Psoas muscle (tissue), 8 donors: ENCODE measurements at regions of chr11 and their contacts with region 1.

Region 1: DNA sequence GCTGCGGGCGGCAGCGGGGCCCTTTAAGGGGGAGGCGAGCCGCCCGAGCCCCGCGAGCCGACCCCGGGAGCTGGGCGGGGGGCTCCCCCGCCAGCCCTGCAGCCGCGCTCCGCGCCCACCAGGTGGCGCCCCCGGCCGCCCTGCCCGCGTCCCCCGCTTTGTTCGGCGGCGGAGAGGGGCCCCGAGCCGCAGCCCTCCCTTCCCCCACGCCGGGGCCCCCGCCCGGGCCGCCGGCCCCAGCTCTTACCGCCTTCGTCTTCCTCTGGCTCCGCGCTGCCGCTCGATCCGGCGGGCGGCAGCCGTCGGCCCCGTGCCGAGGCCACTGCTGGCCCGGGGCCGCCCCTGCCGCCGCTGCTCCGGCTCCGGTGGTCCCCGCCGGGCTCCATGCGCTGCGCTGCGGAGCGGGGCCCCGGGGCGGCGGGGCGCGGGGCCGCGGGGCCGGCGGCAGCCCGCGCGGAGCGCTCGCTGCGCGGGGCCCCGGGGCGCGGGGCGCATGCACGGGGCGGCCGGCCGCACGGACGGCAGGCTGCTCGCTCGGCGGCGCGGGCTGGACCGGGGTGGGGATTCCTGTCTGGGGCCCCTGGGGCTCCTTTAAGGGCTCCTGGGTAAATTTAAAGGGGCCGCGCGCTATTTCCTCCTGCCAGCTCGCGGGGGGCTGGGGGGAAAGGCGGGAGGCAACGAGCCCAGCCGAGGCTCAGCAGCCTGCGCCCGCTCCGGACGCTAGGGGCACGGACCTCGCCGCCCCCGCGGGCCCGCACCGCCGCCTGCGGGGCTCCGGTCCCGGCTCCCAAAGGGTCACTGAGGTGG is at the start of gene ZFTA:
- DNase-seq: peak; percentile 64 to 80
- ATAC-seq: peak; percentile 42 to 69 (median 66)
- H3K4me3 ChIP-seq: peak within 1 kb of the TSS; percentile 87
- H3K27ac ChIP-seq: peak within 1 kb of the TSS; percentile 77
- H3K4me1 ChIP-seq: peaks cover 5% of the 10 kb centered on the region
- H3K27me3 ChIP-seq: no peaks in the 10 kb centered on the region
- CTCF ChIP-seq: peak; percentile 87
- total RNA-seq, gene ZFTA: 4.4 to 10.9 (median 7.8) TPM

Region 2: GRCh38 chr11:63813035-63813562 is 44.7 kb after region 1 on chr11 and contains the start of gene SPINDOC:
- intact Hi-C with region 1: loop called in 1 of 2 experiments (anchors 2 kb)
- DNase-seq: peak; percentile 83 to 89
- ATAC-seq: peak; percentile 91 to 96 (median 94)
- H3K4me3 ChIP-seq: peak within 1 kb of the TSS; percentile 82
- H3K27ac ChIP-seq: peak within 1 kb of the TSS; percentile 52
- H3K4me1 ChIP-seq: peaks cover 11% of the 10 kb centered on the region
- H3K27me3 ChIP-seq: no peaks in the 10 kb centered on the region
- CTCF ChIP-seq: no peak
- total RNA-seq, gene SPINDOC: 3.8 to 8.8 (median 6.9) TPM

Region 3: DNA sequence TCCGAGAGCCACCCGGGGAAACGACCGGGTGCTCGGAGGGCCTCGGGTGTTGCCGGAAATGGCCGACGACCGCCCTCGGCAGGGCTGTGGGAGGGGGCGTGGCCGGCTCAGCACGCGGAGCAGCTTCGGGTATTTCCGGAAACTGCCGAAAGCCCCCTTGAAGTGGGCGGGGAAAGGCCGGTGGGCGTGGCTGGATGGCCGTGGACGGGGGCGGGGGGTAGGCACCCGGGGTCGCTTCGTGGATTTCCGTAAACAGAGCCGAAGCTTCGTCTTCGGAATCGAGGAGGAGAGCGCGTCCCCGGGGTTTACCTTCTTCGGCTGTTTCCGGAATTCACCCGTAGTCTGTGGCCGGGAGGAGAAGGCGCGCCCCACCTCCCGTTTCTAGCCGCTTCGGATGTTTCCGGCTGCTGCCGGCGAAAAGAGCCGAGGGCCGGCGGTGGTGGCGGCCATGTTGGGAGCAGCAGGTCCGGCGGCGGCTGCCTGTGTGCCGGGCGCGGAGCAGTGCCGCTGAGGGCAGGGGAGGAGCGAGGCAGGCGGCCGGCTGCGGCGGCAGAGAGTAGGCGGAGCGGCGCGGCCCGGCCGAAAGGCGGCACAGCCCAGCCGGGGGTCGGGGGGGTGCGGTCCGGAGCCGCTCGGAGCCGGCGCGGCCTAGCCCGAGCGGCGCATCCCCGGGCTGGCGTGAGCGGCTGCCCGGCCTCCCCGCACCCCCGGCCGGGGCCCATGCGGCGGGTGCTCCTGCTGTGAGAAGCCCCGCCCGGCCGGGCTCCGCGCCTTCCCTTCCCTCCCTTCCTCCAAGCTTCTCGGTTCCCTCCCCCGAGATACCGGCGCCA is 70.5 kb after region 1 on chr11 and contains the start of gene MARK2:
- intact Hi-C with region 1: loop called in 1 of 2 experiments (anchors 5 kb)
- DNase-seq: peak; percentile 98 to 99
- ATAC-seq: peak; percentile 91 to 94 (median 93)
- H3K4me3 ChIP-seq: peak within 1 kb of the TSS; percentile 89
- H3K27ac ChIP-seq: peak within 1 kb of the TSS; percentile 92
- H3K4me1 ChIP-seq: peaks cover 45% of the 10 kb centered on the region
- H3K27me3 ChIP-seq: no peaks in the 10 kb centered on the region
- CTCF ChIP-seq: no peak
- total RNA-seq, gene MARK2: 21.7 to 24.9 (median 22.9) TPM

Region 4: DNA sequence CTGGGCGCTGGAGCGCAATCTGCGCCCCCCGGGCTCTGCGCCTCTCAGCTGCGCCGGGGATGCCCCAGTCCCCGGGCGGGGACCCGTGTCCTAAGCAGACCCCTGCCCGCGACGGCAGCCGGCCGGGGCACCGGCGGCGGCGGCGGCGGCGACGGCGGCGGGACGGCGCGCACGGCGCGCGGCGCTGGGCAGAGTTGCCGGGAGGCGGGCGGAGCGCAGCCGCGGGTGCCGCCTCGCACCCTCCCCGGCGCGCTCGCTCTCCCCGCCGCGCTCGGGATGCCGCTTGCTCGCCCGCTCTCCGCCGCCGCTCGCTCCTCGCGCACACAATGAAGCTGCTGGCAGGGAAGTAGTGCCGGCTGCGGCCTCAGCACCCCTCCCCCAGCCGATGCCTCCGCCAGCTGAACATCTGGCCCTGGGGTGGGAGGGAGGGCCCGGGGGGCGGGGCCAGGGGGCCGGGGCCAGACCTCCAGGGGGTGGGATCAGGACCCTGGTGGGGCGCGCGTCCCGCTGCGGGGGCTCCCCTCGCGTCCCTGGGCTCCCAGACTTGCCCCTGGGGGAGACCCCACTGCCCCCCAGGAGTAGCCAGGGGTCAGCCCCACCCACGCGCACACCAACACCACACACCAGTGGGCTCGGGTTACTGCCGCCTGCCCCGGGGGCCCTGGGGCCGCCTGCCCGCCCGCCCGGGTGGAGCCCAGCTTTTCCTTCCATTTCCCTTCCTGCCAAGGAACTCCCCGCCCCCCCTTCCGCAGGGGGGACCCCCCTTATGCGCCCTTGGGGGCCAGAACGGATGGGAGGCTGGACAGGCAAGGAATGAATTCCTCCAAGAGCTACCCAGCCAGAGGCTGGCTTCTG is 148.6 kb after region 1 on chr11 and contains the start of gene RCOR2:
- intact Hi-C with region 1: no loop called
- DNase-seq: peak; percentile 80 to 88
- ATAC-seq: peak; percentile 48 to 71 (median 68)
- H3K4me3 ChIP-seq: peak within 1 kb of the TSS; percentile 73
- H3K27ac ChIP-seq: peak within 1 kb of the TSS; percentile 85
- H3K4me1 ChIP-seq: peaks cover 33% of the 10 kb centered on the region
- H3K27me3 ChIP-seq: no peaks in the 10 kb centered on the region
- CTCF ChIP-seq: no peak
- total RNA-seq, gene RCOR2: 0.25 to 2.1 (median 0.47) TPM

Region 5: GRCh38 chr11:63945477-63946163 is 177.2 kb after region 1 on chr11:
- intact Hi-C with region 1: loop called (anchors 2 to 5 kb)
- DNase-seq: peak; percentile 71 to 84
- ATAC-seq: peak; percentile 84 to 92 (median 88)
- H3K4me3 ChIP-seq: peak overlapping the region; percentile 37
- H3K27ac ChIP-seq: peak overlapping the region; percentile 85
- H3K4me1 ChIP-seq: peaks cover 22% of the 10 kb centered on the region
- H3K27me3 ChIP-seq: no peaks in the 10 kb centered on the region
- CTCF ChIP-seq: peak; percentile 77

Region 6: GRCh38 chr11:64152841-64153691 is 384.6 kb after region 1 on chr11:
- intact Hi-C with region 1: loop called in 1 of 2 experiments (anchors 10 kb)
- DNase-seq: peak; percentile 66 to 81
- ATAC-seq: peak; percentile 50 to 70 (median 64)
- H3K4me3 ChIP-seq: peak overlapping the region; percentile 13
- H3K27ac ChIP-seq: no peak overlapping the region
- H3K4me1 ChIP-seq: peaks cover 76% of the 10 kb centered on the region
- H3K27me3 ChIP-seq: no peaks in the 10 kb centered on the region
- CTCF ChIP-seq: peak; percentile 99